Aorta (tissue), 5 donors: ENCODE measurements at regions of chr11 and their contacts with region 1.

Region 1: GRCh38 chr11:27472398-27473016 is at the start of gene LGR4:
- DNase-seq: peak; percentile 95 to 96
- ATAC-seq: peak; percentile 96
- H3K4me3 ChIP-seq: peak within 1 kb of the TSS; percentile 89 to 93
- H3K27ac ChIP-seq: peak within 1 kb of the TSS; percentile 24 to 85
- H3K4me1 ChIP-seq: peaks cover 0 to 2% of the 10 kb centered on the region in 2 donors
- H3K27me3 ChIP-seq: no peaks in the 10 kb centered on the region
- total RNA-seq, gene LGR4: 19.5 to 23.6 TPM

Region 2: GRCh38 chr11:27281740-27282590 is 190.5 kb before region 1 on chr11:
- intact Hi-C with region 1: loop called in 1 of 2 experiments (anchors 5 kb)
- DNase-seq: peak; percentile 81 to 86
- ATAC-seq: peak; percentile 91
- H3K4me3 ChIP-seq: no peak overlapping the region
- H3K27ac ChIP-seq: peak overlapping the region; percentile 27 to 82
- H3K4me1 ChIP-seq: peaks cover 6 to 9% of the 10 kb centered on the region in 2 donors
- H3K27me3 ChIP-seq: no peaks in the 10 kb centered on the region

Region 3: DNA sequence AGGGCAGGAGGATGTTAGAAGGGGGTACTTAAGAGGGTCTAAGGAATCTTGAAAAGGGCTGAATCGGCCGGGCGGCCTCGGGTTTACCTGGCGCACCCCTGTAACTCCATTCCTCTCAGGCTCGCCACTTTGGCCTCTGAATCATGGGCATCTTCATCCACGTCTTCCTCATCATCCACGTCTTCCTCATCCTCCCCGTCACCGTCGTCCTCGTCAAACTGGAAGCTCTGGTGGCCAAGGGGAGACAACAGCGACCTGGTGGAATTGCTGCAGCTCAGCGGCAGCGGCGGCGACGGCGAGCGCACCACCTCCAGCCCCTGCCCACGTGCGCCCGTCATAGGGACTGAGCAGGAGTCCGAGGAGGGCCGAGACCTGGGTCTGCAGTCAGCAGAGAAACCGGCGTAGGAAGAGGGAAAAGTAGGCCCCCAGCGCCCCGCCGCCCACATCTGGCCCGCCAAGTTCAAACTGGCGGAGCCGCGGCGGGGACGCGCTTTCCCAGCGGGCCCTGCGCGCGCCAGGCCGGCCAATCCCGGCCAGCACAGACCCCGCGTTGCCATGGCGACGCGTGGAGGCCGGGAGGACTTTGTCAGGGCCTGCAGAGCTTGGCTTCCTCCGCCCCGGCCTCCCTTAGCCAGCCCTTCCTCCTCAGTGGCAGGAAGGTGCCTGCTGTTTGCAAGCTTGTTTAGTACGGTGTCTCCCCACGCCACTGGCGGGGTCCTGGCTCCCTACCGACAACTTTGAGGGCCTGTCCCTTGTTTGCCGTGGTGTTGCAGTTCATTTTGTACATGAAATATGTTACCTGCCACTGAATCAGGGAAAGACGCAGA is 109.5 kb before region 1 on chr11 and contains the start of gene CCDC34:
- intact Hi-C with region 1: loop called (anchors 5 kb)
- DNase-seq: peak; percentile 95
- ATAC-seq: peak; percentile 99
- H3K4me3 ChIP-seq: peak within 1 kb of the TSS; percentile 63 to 74
- H3K27ac ChIP-seq: no peak within 1 kb of the TSS
- H3K4me1 ChIP-seq: peaks cover 0 to 2% of the 10 kb centered on the region in 2 donors
- H3K27me3 ChIP-seq: no peaks in the 10 kb centered on the region
- total RNA-seq, gene CCDC34: 1.4 to 3.1 TPM

Region 4: DNA sequence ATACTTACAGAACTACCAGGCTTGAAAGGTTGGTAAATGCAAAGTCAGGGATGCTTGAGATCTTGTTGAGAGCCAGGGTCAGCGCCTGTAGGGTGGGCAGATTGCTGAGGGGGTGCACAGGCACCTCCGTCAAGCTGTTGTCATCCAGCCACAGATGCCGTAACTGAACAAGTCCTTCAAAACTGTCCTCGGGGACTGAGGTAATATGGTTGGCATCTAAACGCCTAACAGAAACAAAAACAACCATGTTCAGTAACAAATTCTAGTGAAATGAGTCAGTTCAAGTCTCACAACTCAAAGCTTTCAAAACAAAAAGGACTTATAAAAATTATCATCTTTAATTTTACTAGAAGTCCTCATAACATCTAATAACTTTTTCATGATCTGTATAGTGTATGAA is 87.3 kb before region 1 on chr11:
- intact Hi-C with region 1: loop called (anchors 2 to 5 kb)
- DNase-seq: peak in 1 of 2 donors; percentile 51
- ATAC-seq: peak; percentile 66
- H3K4me3 ChIP-seq: peak overlapping the region; percentile 42 to 63
- H3K27ac ChIP-seq: peak overlapping the region in 1 of 2 donors; percentile 37
- H3K4me1 ChIP-seq: peaks cover 0 to 5% of the 10 kb centered on the region in 2 donors
- H3K27me3 ChIP-seq: no peaks in the 10 kb centered on the region